OCI-LY7 (cell line): ENCODE measurements at regions of chr17 and their contacts with region 1.

Region 1: DNA sequence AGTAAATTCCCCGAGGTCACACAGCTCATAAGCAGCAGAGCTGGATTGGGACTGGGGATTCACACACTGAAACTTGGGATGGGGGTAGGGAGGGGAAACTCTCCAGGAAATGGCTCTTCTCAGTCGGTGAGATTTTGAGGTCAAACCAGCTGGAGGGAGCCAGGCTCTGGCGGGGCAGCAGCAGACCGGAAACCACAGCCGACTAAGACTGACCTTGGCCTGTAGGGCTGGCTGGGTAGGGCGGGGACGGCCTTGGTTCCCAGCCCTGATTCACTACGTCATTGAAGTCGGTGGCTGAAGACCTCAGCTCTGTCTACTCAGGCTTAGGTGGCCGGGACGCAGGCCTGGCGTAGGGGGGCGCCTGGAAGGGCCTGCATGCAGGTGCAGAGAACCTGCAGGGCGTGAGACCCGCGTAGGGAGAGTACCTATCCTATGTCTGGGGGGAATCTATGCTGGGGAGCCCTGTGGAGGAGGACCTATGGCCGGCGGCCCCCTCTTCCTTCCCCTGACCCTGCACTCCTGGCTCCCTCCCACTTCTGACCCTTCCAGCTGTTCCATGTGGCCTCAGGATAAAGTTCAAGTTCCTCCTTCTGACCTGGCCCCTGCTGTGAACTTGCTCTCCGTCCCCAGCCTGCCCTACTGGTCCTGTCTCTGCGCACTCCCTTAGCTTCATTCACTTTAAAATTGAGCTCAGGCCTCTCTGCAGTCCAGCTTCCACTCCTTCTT is 11.9 kb upstream of the SLC4A1 start:
- DNase-seq: peak; percentile 12
- H3K4me3 ChIP-seq: no peak overlapping the region
- H3K27ac ChIP-seq: no peak overlapping the region
- H3K4me1 ChIP-seq: peaks cover 6% of the 10 kb centered on the region
- CTCF ChIP-seq: no peak

Region 2: DNA sequence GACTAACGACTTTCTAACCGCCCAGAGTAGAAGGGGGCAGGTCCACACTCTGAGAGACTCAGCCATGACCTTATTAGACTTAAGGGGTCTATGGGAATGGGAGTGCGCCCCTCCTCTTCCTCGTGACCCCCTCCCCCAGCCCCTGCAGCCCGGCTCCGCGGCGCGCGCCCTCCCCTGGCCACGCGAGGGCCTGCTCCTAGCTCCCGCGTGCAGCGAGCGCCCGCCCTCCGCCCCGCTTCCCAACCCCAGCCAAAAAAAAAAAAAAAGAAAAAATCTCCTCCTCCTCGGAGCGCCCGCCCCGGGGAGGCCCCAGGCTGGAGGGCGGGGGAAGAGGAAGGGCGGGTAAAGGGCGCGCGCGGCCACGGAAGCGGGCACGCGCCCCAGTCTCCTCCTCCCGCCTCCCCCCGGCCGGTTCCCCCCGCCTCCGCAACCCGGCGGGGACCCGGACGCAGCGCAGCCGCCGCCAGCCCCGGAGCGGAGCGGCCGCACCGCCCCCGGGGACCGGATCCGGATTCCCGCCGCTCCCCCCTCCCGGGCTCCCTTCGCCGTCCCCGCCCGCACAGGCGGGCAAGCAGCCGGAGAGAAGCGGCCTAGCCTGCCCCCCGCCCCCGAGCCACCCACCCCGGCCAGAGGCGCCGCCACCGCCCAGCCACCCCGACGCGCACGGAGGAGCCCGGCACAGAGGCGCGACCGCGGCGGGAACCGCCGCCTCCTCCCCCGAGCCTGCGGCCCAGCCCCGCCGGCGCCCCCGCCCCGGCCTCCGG is 61.3 kb before region 1 on chr17:
- CTCF ChIA-PET with region 1: no interaction called
- POLR2A ChIA-PET with region 1: no interaction called
- intact Hi-C with region 1: no loop called
- DNase-seq: peak; percentile 94
- H3K4me3 ChIP-seq: peak overlapping the region; percentile 90
- H3K27ac ChIP-seq: peak overlapping the region; percentile 86
- H3K4me1 ChIP-seq: peaks cover 36% of the 10 kb centered on the region
- CTCF ChIP-seq: peak; percentile 80

Region 3: DNA sequence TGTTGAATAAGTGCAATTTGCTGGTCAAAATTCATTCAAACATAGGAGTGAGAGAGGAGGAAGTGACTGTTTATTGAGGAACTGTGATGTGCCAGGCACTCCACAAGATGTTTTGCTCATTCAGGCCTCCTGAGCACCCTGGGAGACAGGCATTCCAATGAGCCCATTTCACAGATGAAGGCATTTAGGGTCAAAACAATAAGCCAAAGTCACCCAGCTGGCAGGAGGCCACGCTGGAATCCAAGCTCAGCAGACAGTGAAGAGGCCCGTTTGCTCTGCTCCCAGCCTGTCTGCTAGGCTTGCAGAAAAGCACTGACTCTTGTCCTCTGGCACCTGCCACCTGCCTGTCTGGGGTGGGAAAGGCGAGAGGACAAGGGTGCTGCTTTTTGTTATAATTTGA is 54.9 kb after region 1 on chr17:
- CTCF ChIA-PET with region 1: interaction called, 8 read pairs
- POLR2A ChIA-PET with region 1: interaction called, 10 read pairs
- intact Hi-C with region 1: no loop called
- DNase-seq: peak; percentile 59
- H3K4me3 ChIP-seq: no peak overlapping the region
- H3K27ac ChIP-seq: peak overlapping the region; percentile 49
- H3K4me1 ChIP-seq: peaks cover 38% of the 10 kb centered on the region
- CTCF ChIP-seq: 0 out of 2 replicates have a peak, but pooled peaks have one; percentile 19